Activated naive CD4-positive, alpha-beta T cell treated with anti-CD3 and anti-CD28 coated beads for 36 hours (primary cell): ENCODE measurements at regions of chr1 and their contacts with region 1.

Region 1: DNA sequence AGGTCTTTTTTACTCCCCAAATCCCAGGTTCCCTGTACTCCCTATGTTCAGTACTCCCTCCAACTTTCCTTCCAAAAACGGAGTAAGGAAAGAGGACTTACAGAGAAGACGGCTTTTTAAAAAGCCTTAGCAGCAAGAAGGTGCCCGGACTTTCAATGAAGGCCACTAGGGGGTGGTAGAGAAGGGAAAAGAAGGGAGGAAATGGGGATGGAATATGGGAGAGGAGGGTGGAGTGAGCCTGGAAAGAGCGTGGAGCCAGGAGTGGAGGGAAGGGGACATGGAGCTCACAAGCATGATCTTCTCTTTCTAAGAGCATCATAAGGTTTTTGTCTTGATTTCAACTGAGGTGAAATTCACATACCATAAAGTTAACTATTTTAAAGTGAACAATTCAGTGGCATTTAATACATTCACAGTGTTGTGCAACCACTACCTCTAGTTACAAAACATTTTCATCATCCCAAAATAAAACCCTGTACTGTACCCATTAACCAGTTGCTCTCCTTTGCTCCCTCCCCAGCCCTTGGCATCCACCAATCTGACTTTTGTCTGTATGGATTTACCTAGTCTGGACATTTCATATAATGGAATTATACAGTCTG is 129.9 kb downstream of the ZNF281 start:
- DNase-seq: peak; percentile 62
- H3K4me3 Mint-ChIP-seq: no peak overlapping the region
- H3K27ac Mint-ChIP-seq: no peak overlapping the region
- H3K4me1 Mint-ChIP-seq: no peaks in the 10 kb centered on the region
- H3K27me3 Mint-ChIP-seq: no peaks in the 10 kb centered on the region

Region 2: GRCh38 chr1:199684686-199685273 is 595.1 kb before region 1 on chr1:
- CTCF ChIA-PET with region 1: interaction called, 3 read pairs
- intact Hi-C with region 1: loop called (anchors 1 kb)
- DNase-seq: peak; percentile 31
- H3K4me3 Mint-ChIP-seq: no peak overlapping the region
- H3K27ac Mint-ChIP-seq: no peak overlapping the region
- H3K4me1 Mint-ChIP-seq: no peaks in the 10 kb centered on the region
- H3K27me3 Mint-ChIP-seq: peaks cover 13% of the 10 kb centered on the region

Region 3: GRCh38 chr1:200139661-200140250 is 140.2 kb before region 1 on chr1:
- CTCF ChIA-PET with region 1: interaction called, 6 read pairs
- intact Hi-C with region 1: loop called (anchors 1 kb)
- DNase-seq: peak; percentile 46
- H3K4me3 Mint-ChIP-seq: no peak overlapping the region
- H3K27ac Mint-ChIP-seq: no peak overlapping the region
- H3K4me1 Mint-ChIP-seq: no peaks in the 10 kb centered on the region
- H3K27me3 Mint-ChIP-seq: no peaks in the 10 kb centered on the region

Region 4: DNA sequence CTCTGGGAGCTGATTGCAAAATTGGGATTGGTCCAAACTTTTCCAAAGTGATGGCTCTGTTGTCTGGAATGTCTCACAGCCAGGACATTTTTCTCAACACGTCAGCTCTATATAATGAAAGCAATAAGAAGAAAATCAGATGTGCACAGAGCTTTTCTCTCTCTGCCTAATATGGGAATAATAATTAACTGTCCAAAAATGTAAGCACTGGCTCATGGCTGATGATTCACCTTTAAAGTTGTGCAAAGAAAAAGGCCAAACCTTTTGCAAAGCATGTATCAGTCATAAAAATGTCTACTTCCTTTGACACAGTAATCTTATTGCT is 99.5 kb after region 1 on chr1:
- CTCF ChIA-PET with region 1: no interaction called
- intact Hi-C with region 1: no loop called
- DNase-seq: no peak
- H3K4me3 Mint-ChIP-seq: no peak overlapping the region
- H3K27ac Mint-ChIP-seq: no peak overlapping the region
- H3K4me1 Mint-ChIP-seq: peaks cover 3% of the 10 kb centered on the region
- H3K27me3 Mint-ChIP-seq: no peaks in the 10 kb centered on the region

Region 5: GRCh38 chr1:200510228-200510623 is 230.3 kb after region 1 on chr1:
- CTCF ChIA-PET with region 1: interaction called, 5 read pairs
- intact Hi-C with region 1: loop called (anchors 1 kb)
- DNase-seq: peak; percentile 85
- H3K4me3 Mint-ChIP-seq: no peak overlapping the region
- H3K27ac Mint-ChIP-seq: no peak overlapping the region
- H3K4me1 Mint-ChIP-seq: peaks cover 3% of the 10 kb centered on the region
- H3K27me3 Mint-ChIP-seq: no peaks in the 10 kb centered on the region